Endothelial cell of umbilical vein (primary cell): ENCODE measurements at regions of chr18 and their contacts with region 1.

Region 1: DNA sequence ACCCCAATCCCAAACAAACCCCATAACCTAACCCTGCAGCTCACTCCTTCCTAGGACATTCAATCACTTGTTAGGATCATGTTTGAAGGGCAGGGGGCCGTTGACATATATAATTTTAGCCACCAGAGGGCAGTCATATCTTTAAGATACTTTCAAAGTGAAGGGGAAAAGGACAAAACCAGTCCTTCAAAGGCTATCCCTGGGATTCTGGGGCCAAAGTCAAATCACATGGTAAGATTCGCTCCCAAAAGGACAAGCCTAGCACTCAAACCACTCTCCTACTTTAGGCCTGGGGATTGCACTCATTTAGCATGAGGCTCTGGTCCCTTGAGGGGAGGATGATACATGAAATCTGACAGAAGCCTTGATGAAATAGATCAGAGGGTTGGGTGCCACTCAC is 44.6 kb downstream of the HAUS1 start:
- DNase-seq: peak; percentile 66
- H3K4me3 ChIP-seq: no peak overlapping the region
- H3K27ac ChIP-seq: no peak overlapping the region
- H3K4me1 ChIP-seq: no peaks in the 10 kb centered on the region
- H3K27me3 ChIP-seq: no peaks in the 10 kb centered on the region
- CTCF ChIP-seq: peak; percentile 52 to 59
- POLR2A ChIP-seq: no peak

Region 2: DNA sequence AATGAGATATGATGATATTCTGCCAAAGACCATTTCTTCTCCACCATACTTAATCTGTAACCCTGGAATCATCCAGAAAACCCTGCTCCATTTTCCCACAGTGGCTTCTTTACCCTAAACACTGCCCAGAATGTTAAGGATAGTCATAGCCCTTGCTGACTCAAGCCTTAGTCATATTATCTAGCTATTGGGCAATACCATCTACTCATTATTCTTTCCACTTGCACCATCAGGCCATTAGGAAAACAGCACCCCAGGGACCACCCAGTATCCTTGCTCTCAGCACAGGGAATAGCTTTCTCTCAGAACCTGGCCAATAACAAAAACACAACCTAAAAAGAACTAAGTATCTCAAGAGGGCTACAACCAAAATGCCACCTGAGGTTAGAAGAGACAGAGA is 979.2 kb before region 1 on chr18:
- CTCF ChIA-PET with region 1: no interaction called
- POLR2A ChIA-PET with region 1: no interaction called
- dilution Hi-C with region 1: no loop called
- intact Hi-C with region 1: no loop called
- DNase-seq: no peak
- H3K4me3 ChIP-seq: no peak overlapping the region
- H3K27ac ChIP-seq: no peak overlapping the region
- H3K4me1 ChIP-seq: no peaks in the 10 kb centered on the region
- H3K27me3 ChIP-seq: no peaks in the 10 kb centered on the region
- CTCF ChIP-seq: no peak
- POLR2A ChIP-seq: no peak

Region 3: GRCh38 chr18:46051731-46052461 is 96.9 kb before region 1 on chr18:
- CTCF ChIA-PET with region 1: no interaction called
- POLR2A ChIA-PET with region 1: no interaction called
- dilution Hi-C with region 1: no loop called
- intact Hi-C with region 1: no loop called
- DNase-seq: no peak
- H3K4me3 ChIP-seq: no peak overlapping the region
- H3K27ac ChIP-seq: no peak overlapping the region
- H3K4me1 ChIP-seq: no peaks in the 10 kb centered on the region
- H3K27me3 ChIP-seq: peaks cover 0 to 7% of the 10 kb centered on the region in 2 experiments
- CTCF ChIP-seq: no peak
- POLR2A ChIP-seq: no peak

Region 4: DNA sequence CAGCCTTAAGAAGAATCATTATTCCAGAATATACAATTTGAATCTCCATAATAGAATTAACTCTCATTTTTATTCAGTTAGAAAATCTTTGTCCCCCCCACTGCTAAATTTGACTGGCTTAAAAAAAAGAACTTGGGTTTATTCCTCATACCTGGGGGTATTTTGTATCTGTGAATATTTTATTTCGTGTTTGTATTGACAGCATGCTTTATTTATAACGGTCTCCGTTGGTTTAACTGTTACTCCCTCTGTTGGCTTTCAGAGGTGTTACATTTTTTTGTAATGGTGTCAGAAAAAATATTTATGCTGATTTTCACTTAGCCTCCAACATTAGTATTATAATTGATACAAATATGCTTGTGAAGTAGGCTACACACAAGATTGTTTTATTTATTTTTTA is 64.5 kb after region 1 on chr18:
- CTCF ChIA-PET with region 1: interaction called, 9 read pairs
- POLR2A ChIA-PET with region 1: no interaction called
- dilution Hi-C with region 1: no loop called
- intact Hi-C with region 1: loop called (anchors 1 kb)
- DNase-seq: peak; percentile 32
- H3K4me3 ChIP-seq: no peak overlapping the region
- H3K27ac ChIP-seq: no peak overlapping the region
- H3K4me1 ChIP-seq: peaks cover 12% of the 10 kb centered on the region
- H3K27me3 ChIP-seq: no peaks in the 10 kb centered on the region
- CTCF ChIP-seq: peak in 1 of 2 donors; percentile 32
- POLR2A ChIP-seq: no peak

Region 5: GRCh38 chr18:46481048-46481846 is 332.4 kb after region 1 on chr18:
- CTCF ChIA-PET with region 1: interaction called, 9 read pairs
- POLR2A ChIA-PET with region 1: no interaction called
- dilution Hi-C with region 1: no loop called
- intact Hi-C with region 1: loop called (anchors 1 kb)
- DNase-seq: peak; percentile 37
- H3K4me3 ChIP-seq: no peak overlapping the region
- H3K27ac ChIP-seq: no peak overlapping the region
- H3K4me1 ChIP-seq: no peaks in the 10 kb centered on the region
- H3K27me3 ChIP-seq: no peaks in the 10 kb centered on the region
- CTCF ChIP-seq: peak; percentile 57 to 61
- POLR2A ChIP-seq: no peak